Caco-2 (cell line): ENCODE measurements at regions of chr2 and their contacts with region 1.

Region 1: DNA sequence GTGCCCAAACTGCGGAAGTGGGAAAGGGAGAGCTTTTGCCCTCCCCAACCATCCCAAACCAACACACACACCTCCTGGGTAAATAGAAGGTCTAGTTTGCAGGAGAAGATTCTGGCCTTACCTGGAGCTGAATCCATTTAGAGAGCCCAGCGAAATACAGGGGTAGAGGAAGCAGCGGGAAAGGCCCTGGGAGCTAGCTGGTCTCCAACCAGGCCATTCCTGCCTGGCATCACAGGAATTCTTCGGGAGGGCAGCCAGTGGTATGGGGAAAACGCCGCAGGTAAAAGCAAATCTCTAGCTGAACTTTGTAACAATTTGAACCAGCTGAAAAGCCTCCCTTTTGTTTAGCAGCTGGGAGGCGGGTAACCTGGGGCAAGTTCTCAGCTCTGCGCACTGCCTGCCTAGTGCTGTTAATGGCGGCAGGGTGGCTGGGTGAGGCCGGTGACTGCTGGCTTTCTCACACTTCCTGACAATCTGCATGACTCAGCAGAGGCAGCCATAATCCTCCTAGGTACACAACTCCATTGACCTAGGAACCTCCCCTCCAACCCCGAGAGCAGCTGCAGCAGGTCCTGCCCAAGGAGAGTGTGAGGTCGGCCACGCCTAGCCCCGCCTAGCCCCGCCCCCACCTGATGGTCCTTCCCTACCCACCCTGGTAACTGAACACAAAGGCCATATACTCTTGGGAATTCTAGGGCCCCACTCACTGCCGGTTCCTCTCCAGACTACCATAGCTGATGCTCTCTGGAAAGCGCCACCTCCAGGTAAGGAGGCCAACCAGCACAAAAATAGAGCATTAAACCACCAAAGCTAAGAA is 483.8 kb upstream of the REG3G start:
- DNase-seq: peak; percentile 94 to 98
- H3K4me3 ChIP-seq: peak overlapping the region; percentile 79
- H3K4me3 Mint-ChIP-seq: peak overlapping the region; percentile 87
- H3K27ac Mint-ChIP-seq: peak overlapping the region; percentile 96
- H3K4me1 ChIP-seq: peaks cover 7% of the 10 kb centered on the region; the same call in 1 of the 2 replicates
- H3K4me1 Mint-ChIP-seq: peaks cover 19% of the 10 kb centered on the region
- H3K27me3 ChIP-seq: no peaks in the 10 kb centered on the region
- H3K27me3 Mint-ChIP-seq: peaks cover 3% of the 10 kb centered on the region
- CTCF ChIP-seq: peak; percentile 50 to 77

Region 2: DNA sequence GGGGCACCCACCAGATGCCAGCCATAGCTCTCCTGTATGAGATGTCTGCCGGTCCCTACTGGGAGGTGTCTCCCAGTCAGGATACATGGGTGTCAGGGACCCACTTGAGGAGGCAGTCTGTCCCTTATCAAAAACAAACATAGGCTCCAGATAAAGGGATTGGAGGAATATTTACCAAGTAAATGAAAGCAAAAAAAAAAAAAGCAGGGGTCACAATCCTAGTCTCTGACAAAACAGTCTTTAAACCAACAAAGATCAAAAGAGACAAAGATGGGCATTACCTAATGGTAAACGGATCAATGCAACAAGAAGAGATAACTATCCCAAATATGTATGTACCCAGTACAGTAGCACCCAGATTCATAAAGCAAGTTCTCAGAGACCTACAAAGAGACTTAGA is 379.5 kb before region 1 on chr2:
- CTCF ChIA-PET with region 1: no interaction called
- POLR2A ChIA-PET with region 1: no interaction called
- intact Hi-C with region 1: loop called (anchors 1 kb)
- DNase-seq: peak; percentile 71 to 72
- H3K4me3 ChIP-seq: no peak overlapping the region
- H3K4me3 Mint-ChIP-seq: peak overlapping the region; percentile 16
- H3K27ac Mint-ChIP-seq: no peak overlapping the region
- H3K4me1 ChIP-seq: peaks cover 15% of the 10 kb centered on the region
- H3K4me1 Mint-ChIP-seq: peaks cover 23% of the 10 kb centered on the region
- H3K27me3 ChIP-seq: no peaks in the 10 kb centered on the region
- H3K27me3 Mint-ChIP-seq: peaks cover 4% of the 10 kb centered on the region
- CTCF ChIP-seq: no peak

Region 3: GRCh38 chr2:78351208-78351607 is 190.5 kb before region 1 on chr2:
- CTCF ChIA-PET with region 1: no interaction called
- POLR2A ChIA-PET with region 1: no interaction called
- intact Hi-C with region 1: loop called (anchors 10 kb)
- DNase-seq: no peak
- H3K4me3 ChIP-seq: no peak overlapping the region
- H3K4me3 Mint-ChIP-seq: no peak overlapping the region
- H3K27ac Mint-ChIP-seq: no peak overlapping the region
- H3K4me1 ChIP-seq: no peaks in the 10 kb centered on the region
- H3K4me1 Mint-ChIP-seq: no peaks in the 10 kb centered on the region
- H3K27me3 ChIP-seq: no peaks in the 10 kb centered on the region
- H3K27me3 Mint-ChIP-seq: no peaks in the 10 kb centered on the region
- CTCF ChIP-seq: peak; percentile 8 to 43

Region 4: GRCh38 chr2:78418021-78418420 is 123.6 kb before region 1 on chr2:
- CTCF ChIA-PET with region 1: no interaction called
- POLR2A ChIA-PET with region 1: interaction called, 4 read pairs
- intact Hi-C with region 1: loop called (anchors 5 kb)
- DNase-seq: no peak
- H3K4me3 ChIP-seq: no peak overlapping the region
- H3K4me3 Mint-ChIP-seq: no peak overlapping the region
- H3K27ac Mint-ChIP-seq: no peak overlapping the region
- H3K4me1 ChIP-seq: peaks cover 16% of the 10 kb centered on the region
- H3K4me1 Mint-ChIP-seq: peaks cover 21% of the 10 kb centered on the region
- H3K27me3 ChIP-seq: no peaks in the 10 kb centered on the region
- H3K27me3 Mint-ChIP-seq: no peaks in the 10 kb centered on the region
- CTCF ChIP-seq: no peak

Region 5: DNA sequence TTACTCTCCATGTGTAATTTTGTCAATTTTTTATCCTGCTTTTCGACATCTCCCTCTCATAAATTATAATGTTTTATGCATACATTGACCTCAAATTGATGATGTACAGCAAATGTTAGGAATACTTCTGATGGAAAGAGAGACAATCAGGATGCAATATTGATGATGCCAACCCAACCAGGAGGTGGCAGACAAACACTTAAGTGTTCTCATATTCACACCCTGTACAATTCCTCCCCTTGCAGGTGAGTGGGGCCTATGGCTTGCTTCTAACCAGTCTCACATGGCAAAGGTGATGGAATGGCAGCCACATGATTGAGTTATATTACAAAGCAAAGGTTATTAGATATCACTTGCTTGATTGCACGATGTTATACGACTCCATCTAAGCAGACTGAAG is 110.4 kb before region 1 on chr2:
- CTCF ChIA-PET with region 1: no interaction called
- POLR2A ChIA-PET with region 1: no interaction called
- intact Hi-C with region 1: loop called (anchors 5 kb)
- DNase-seq: peak in 1 of 2 experiments; percentile 19
- H3K4me3 ChIP-seq: no peak overlapping the region
- H3K4me3 Mint-ChIP-seq: no peak overlapping the region
- H3K27ac Mint-ChIP-seq: no peak overlapping the region
- H3K4me1 ChIP-seq: no peaks in the 10 kb centered on the region
- H3K4me1 Mint-ChIP-seq: peaks cover 5% of the 10 kb centered on the region
- H3K27me3 ChIP-seq: no peaks in the 10 kb centered on the region
- H3K27me3 Mint-ChIP-seq: no peaks in the 10 kb centered on the region
- CTCF ChIP-seq: peak in 1 of 2 experiments; percentile 4

Region 6: DNA sequence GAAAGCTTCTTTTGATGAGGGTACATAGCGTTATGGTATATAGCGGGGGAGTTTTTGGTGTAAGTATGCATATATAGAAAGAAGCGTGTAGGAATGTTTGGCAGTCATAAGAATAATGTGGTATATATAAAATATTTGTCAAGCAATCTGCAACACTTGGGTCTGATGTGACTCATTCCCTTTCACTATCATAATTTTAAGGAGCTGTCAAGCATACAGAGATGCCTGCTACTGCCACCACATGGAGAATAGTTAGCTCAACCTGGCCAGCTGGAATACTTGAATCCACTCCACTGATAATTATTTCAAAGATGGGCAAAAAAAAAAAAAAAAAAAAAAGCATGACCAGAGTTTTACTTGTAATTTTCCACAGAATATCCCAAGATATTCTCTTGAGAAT is 76.0 kb before region 1 on chr2:
- CTCF ChIA-PET with region 1: no interaction called
- POLR2A ChIA-PET with region 1: interaction called, 12 read pairs
- intact Hi-C with region 1: no loop called
- DNase-seq: no peak
- H3K4me3 ChIP-seq: no peak overlapping the region
- H3K4me3 Mint-ChIP-seq: no peak overlapping the region
- H3K27ac Mint-ChIP-seq: no peak overlapping the region
- H3K4me1 ChIP-seq: no peaks in the 10 kb centered on the region
- H3K4me1 Mint-ChIP-seq: peaks cover 6% of the 10 kb centered on the region
- H3K27me3 ChIP-seq: no peaks in the 10 kb centered on the region
- H3K27me3 Mint-ChIP-seq: no peaks in the 10 kb centered on the region
- CTCF ChIP-seq: peak in 1 of 2 experiments; percentile 21

Region 7: DNA sequence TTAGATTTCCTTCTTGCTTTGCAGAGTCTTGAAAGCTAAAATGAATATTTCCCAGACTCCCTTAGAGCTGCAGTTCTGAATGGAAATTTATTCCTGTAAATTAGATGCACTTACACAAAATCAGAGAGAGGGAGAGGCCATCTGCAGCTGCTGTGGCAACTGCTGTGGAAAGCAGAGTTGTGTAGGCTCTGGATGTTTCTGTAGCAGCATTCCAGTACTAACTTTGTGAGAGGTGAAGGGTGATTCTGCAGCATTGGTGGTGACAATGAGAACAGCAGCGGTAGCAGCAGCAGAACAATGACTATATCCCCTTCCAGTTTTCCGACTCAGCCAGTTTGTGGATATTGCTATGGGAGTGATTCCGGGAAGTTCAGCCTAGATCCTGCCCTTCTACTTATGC is 50.8 kb after region 1 on chr2:
- CTCF ChIA-PET with region 1: no interaction called
- POLR2A ChIA-PET with region 1: no interaction called
- intact Hi-C with region 1: no loop called
- DNase-seq: no peak
- H3K4me3 ChIP-seq: no peak overlapping the region
- H3K4me3 Mint-ChIP-seq: no peak overlapping the region
- H3K27ac Mint-ChIP-seq: no peak overlapping the region
- H3K4me1 ChIP-seq: no peaks in the 10 kb centered on the region
- H3K4me1 Mint-ChIP-seq: no peaks in the 10 kb centered on the region
- H3K27me3 ChIP-seq: no peaks in the 10 kb centered on the region
- H3K27me3 Mint-ChIP-seq: peaks cover 17% of the 10 kb centered on the region
- CTCF ChIP-seq: no peak

Region 8: GRCh38 chr2:78676921-78677696 is 135.4 kb after region 1 on chr2:
- CTCF ChIA-PET with region 1: no interaction called
- POLR2A ChIA-PET with region 1: no interaction called
- intact Hi-C with region 1: no loop called
- DNase-seq: no peak
- H3K4me3 ChIP-seq: no peak overlapping the region
- H3K4me3 Mint-ChIP-seq: no peak overlapping the region
- H3K27ac Mint-ChIP-seq: no peak overlapping the region
- H3K4me1 ChIP-seq: no peaks in the 10 kb centered on the region
- H3K4me1 Mint-ChIP-seq: peaks cover 6% of the 10 kb centered on the region
- H3K27me3 ChIP-seq: no peaks in the 10 kb centered on the region
- H3K27me3 Mint-ChIP-seq: peaks cover 7% of the 10 kb centered on the region
- CTCF ChIP-seq: no peak

Region 9: GRCh38 chr2:78701546-78701945 is 159.9 kb after region 1 on chr2:
- CTCF ChIA-PET with region 1: no interaction called
- POLR2A ChIA-PET with region 1: no interaction called
- intact Hi-C with region 1: no loop called
- DNase-seq: no peak
- H3K4me3 ChIP-seq: no peak overlapping the region
- H3K4me3 Mint-ChIP-seq: no peak overlapping the region
- H3K27ac Mint-ChIP-seq: no peak overlapping the region
- H3K4me1 ChIP-seq: no peaks in the 10 kb centered on the region
- H3K4me1 Mint-ChIP-seq: no peaks in the 10 kb centered on the region
- H3K27me3 ChIP-seq: no peaks in the 10 kb centered on the region
- H3K27me3 Mint-ChIP-seq: no peaks in the 10 kb centered on the region
- CTCF ChIP-seq: no peak